Activated naive CD4-positive, alpha-beta T cell treated with anti-CD3 and anti-CD28 coated beads for 36 hours (primary cell): ENCODE measurements at regions of chr2 and their contacts with region 1.

Region 1: GRCh38 chr2:216034065-216034464 is 20.7 kb upstream of the MREG start:
- DNase-seq: peak; percentile 94
- H3K4me3 Mint-ChIP-seq: no peak overlapping the region
- H3K27ac Mint-ChIP-seq: no peak overlapping the region
- H3K4me1 Mint-ChIP-seq: peaks cover 26% of the 10 kb centered on the region
- H3K27me3 Mint-ChIP-seq: no peaks in the 10 kb centered on the region

Region 2: DNA sequence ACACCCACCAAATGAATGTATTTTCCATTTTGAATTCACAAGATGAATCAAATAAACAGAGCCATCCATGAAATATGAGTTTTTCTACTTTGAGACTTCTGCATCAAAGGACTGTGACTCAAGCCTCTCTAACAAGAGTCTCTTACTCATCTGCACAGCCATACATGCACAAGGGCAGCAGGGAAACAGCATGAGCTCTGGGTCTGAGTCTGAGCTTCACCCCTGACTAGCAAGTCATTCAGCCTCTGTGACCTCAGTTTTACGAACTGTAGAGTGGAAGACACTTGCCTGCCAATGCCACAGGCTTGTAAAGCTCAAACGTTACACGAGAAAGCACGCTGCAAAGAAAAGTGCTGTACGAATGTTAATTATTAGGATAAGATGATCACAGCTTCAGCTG is 63.6 kb before region 1 on chr2:
- CTCF ChIA-PET with region 1: no interaction called
- intact Hi-C with region 1: loop called (anchors 2 kb)
- DNase-seq: peak; percentile 56
- H3K4me3 Mint-ChIP-seq: no peak overlapping the region
- H3K27ac Mint-ChIP-seq: peak overlapping the region; percentile 0
- H3K4me1 Mint-ChIP-seq: peaks cover 24% of the 10 kb centered on the region
- H3K27me3 Mint-ChIP-seq: no peaks in the 10 kb centered on the region

Region 3: GRCh38 chr2:216044883-216045486 is 10.9 kb after region 1 on chr2:
- CTCF ChIA-PET with region 1: interaction called, 17 read pairs
- intact Hi-C with region 1: no loop called
- DNase-seq: no peak
- H3K4me3 Mint-ChIP-seq: no peak overlapping the region
- H3K27ac Mint-ChIP-seq: no peak overlapping the region
- H3K4me1 Mint-ChIP-seq: peaks cover 6% of the 10 kb centered on the region
- H3K27me3 Mint-ChIP-seq: no peaks in the 10 kb centered on the region

Region 4: GRCh38 chr2:216108967-216109921 is 75.2 kb after region 1 on chr2 and contains the start of gene XRCC5:
- CTCF ChIA-PET with region 1: interaction called, 33 read pairs
- intact Hi-C with region 1: loop called (anchors 1 kb)
- DNase-seq: peak; percentile 99
- H3K4me3 Mint-ChIP-seq: peak within 1 kb of the TSS; percentile 100
- H3K27ac Mint-ChIP-seq: peak within 1 kb of the TSS; percentile 99
- H3K4me1 Mint-ChIP-seq: peaks cover 45% of the 10 kb centered on the region
- H3K27me3 Mint-ChIP-seq: no peaks in the 10 kb centered on the region
- total RNA-seq, gene XRCC5: 486 to 495 TPM

Region 5: DNA sequence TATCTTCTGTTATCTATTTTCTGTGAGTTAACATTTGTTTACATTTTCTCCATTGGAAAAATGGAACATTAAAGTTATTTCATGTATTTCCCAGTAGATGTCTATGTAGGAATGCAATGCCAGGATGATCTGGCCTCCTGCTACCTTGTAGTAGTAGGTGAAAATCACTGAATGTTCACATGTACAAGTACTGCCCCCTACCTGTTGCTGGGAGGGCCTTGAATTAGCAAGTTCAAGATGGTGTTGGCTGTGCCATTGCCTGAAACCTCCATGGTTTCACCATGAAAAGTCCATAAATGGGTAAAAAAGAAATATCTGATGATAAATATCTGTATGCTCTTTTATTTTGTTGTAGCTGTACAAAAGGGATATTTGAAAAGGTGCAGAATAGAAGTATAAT is 105.8 kb after region 1 on chr2:
- CTCF ChIA-PET with region 1: interaction called, 9 read pairs
- intact Hi-C with region 1: loop called (anchors 1 kb)
- DNase-seq: peak; percentile 66
- H3K4me3 Mint-ChIP-seq: no peak overlapping the region
- H3K27ac Mint-ChIP-seq: peak overlapping the region; percentile 14
- H3K4me1 Mint-ChIP-seq: peaks cover 40% of the 10 kb centered on the region
- H3K27me3 Mint-ChIP-seq: no peaks in the 10 kb centered on the region

Region 6: DNA sequence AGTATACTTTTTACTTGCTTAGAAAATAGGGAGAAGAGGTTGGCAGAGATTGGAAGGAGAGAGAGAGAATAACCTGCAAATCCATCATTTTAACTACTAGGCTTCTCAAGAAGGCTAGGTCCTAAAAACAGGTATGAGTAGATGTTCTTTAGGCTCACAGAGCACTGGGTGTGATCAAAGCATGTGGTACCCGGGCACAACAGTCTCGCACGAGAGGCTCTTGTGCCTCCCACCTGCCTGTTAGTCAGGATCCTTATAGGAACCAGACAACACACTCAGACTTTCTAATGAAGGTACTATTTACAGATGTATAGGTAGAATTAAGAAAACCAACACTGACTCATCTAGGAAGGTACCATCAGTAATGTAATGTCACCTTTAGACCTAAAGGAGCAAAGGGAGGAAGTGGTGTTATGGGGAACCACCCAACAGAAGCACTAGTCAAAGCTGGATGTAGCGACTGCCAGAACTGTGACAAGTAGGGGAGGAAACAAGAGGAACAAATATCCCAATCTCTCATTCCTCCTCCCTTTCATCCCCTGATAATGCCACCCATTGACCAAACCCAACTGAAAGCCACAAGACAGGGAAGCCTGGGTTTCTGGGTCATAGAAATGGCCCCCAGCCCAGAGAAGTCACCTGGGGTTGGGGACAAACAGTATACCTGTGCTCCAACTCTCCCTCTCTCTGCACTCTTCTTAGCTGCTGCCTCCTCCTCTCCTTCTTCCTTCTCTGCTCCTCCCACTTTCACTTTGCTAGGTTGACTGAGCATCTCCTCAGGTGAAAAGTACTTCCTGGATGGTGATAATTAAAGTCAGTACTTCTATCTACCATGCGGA is 354.2 kb after region 1 on chr2:
- CTCF ChIA-PET with region 1: no interaction called
- intact Hi-C with region 1: loop called (anchors 1 kb)
- DNase-seq: peak; percentile 70
- H3K4me3 Mint-ChIP-seq: no peak overlapping the region
- H3K27ac Mint-ChIP-seq: peak overlapping the region; percentile 71
- H3K4me1 Mint-ChIP-seq: peaks cover 16% of the 10 kb centered on the region
- H3K27me3 Mint-ChIP-seq: no peaks in the 10 kb centered on the region

Region 7: DNA sequence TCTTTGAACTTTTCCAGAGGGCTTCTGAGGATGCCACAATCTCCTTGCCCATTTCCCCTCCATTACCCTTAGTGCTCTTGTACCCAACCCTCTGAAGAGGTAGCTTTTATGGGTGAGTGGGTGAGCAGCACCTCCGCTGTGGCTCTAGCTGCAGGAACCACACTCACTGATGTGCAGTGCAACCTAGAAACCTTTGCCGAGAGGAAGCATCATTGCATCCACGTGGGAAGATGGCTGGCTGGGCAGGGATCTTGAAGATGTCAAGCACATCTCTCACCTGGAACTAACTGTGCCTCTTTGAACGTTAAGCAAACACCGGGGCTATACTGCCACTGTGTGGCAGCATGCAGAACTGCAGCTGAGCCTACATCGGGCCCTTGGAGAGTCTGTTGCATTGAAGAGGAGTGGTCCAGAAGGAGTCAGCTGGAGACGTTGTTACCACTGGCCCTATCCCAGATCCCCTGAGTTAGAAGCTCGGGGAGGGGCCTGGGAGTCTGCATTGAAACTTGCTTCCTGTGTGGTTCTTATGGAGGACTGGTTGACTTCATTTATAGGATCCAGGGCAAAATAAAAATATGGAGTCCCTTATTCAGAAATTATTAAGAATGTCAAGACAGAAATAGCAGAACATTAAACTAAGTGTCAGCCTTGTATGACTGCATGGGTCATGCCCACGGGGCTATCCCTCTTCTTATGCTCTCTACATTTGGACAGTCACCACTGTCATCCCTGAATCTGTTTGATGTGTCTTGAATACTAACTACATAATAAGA is 632.6 kb after region 1 on chr2:
- CTCF ChIA-PET with region 1: no interaction called
- intact Hi-C with region 1: loop called (anchors 1 kb)
- DNase-seq: peak; percentile 83
- H3K4me3 Mint-ChIP-seq: no peak overlapping the region
- H3K27ac Mint-ChIP-seq: no peak overlapping the region
- H3K4me1 Mint-ChIP-seq: no peaks in the 10 kb centered on the region
- H3K27me3 Mint-ChIP-seq: peaks cover 3% of the 10 kb centered on the region